Body of pancreas (tissue), 4 donors: ENCODE measurements at regions of chr14 and their contacts with region 1.

Region 1: DNA sequence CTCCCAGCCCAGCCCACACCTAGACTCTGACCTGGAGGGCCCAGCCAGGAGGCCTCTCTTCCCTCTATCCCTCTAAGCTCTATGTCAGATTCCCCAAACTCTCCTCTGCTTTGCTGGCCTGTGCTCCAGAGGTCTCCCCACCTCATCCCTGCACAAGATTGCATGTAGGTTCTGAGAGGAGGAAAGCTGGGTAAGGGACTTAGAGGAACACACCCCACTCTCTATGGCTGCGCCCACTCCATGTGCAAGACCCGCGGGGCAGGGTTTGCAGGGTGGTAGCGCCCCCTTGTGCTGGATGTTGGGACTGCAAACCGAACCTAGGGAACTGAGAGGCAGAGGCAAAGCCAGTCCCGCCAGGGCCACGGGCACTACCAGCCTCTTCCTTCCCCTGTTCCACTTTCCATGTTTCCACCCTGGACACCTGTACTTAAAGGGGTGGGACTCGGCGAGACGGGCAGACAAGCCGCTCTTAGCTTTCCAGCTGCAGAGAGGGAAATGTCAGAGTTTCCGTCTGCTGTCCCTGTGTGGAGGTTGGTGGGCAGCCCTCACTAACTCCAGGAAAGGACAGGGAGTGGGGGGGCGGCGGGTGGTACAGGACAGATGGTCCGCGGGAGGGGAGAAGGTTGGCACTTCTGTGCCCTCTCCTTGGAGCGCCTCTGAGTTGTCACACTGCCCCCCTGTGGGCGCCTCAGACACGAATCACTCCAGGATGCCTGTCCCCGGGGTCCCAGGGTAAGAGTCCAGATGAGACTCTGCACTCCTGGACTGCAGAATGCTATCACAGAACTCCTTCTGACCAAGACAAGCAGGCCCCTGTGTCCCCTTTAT is 16.8 kb downstream of the MMP14 start:
- DNase-seq: peak; percentile 86 to 93 (median 90)
- ATAC-seq: peak; percentile 81
- H3K4me3 ChIP-seq: no peak overlapping the region
- H3K27ac ChIP-seq: peak overlapping the region; percentile 53 to 84 (median 80)
- H3K4me1 ChIP-seq: peaks cover 28% of the 10 kb centered on the region
- H3K27me3 ChIP-seq: no peaks in the 10 kb centered on the region
- CTCF ChIP-seq: peak; percentile 76 to 99 (median 93)
- POLR2A ChIP-seq: peak in 2 of 3 donors; percentile 28 to 47

Region 2: DNA sequence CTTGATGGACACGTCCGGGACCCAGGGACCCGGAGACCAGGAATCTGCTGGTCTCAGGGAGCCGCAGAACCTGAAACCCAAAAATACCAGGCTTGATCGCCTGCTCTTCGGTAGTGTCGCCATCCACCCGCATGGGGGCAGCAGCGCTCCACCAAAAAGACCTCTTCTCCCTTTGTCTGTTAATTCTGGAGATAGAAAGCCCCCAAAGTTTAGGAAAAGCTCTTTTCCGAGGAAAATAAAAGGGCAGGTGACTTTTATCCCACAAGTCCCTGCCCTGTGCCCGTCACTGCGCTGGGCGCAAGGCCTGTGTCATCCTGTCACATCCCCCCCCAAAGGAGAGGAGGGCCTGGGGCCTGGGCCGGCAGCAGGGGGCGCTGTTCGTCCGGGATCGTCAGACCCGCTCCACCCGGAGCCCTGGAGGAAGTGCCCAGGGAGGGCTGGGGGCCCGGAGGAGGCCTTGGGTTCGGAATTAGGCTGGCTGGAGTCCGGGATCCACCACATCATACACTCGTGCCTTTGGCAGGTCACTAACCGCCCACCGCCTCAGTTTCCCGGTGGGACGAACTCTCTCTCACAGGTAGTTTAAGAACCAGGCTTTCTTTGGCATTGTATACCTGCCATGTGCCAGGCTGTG is 296.0 kb before region 1 on chr14:
- intact Hi-C with region 1: loop called (anchors 10 kb)
- DNase-seq: peak; percentile 78 to 88 (median 84)
- ATAC-seq: peak; percentile 84
- H3K4me3 ChIP-seq: no peak overlapping the region
- H3K27ac ChIP-seq: peak overlapping the region; percentile 26 to 85 (median 74)
- H3K4me1 ChIP-seq: peaks cover 56% of the 10 kb centered on the region
- H3K27me3 ChIP-seq: no peaks in the 10 kb centered on the region
- CTCF ChIP-seq: peak; percentile 96 to 100 (median 98)
- POLR2A ChIP-seq: peak in 2 of 3 donors; percentile 12 to 19

Region 3: GRCh38 chr14:22822571-22823098 is 30.5 kb before region 1 on chr14:
- intact Hi-C with region 1: loop called (anchors 5 kb)
- DNase-seq: peak; percentile 67 to 76 (median 70)
- ATAC-seq: peak; percentile 46
- H3K4me3 ChIP-seq: no peak overlapping the region
- H3K27ac ChIP-seq: peak overlapping the region; percentile 74 to 88 (median 82)
- H3K4me1 ChIP-seq: peaks cover 60% of the 10 kb centered on the region
- H3K27me3 ChIP-seq: no peaks in the 10 kb centered on the region
- CTCF ChIP-seq: peak; percentile 70 to 81 (median 77)
- POLR2A ChIP-seq: no peak